Prostate gland (tissue), 2 donors: ENCODE measurements at regions of chr3 and their contacts with region 1.

Region 1: DNA sequence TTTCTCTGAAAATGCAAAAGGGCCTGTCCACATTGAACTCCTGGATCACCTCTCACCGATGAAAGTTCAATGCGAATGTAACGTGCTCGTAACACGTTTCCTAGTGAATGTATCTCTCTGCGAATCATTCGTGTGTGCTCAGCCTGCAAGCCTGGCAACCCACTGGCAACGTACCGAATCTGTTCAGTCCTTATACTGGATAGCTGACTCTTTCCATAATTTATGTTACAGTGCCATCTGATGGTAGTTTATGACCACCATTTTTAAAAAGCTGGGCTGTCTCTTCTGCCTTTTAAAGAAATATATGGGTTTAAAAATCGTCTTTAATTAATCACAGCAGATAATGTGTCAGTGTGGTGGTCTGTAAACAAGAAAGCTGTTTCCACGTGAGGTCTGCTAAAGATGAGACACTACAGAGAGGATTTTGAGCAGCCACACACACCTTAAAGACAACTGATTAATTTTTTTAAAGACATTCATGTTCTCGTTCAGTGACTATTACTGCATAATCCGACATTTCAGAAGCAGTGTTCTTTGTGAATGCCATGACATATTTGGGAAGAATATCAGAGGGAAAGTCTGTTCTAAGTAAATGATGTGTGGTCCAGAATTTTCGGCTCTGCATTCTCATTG is 69.4 kb upstream of the FOXP1 start:
- DNase-seq: peak; percentile 71
- H3K4me3 ChIP-seq: no peak overlapping the region
- H3K27ac ChIP-seq: peak overlapping the region in 1 of 2 donors; percentile 9
- H3K4me1 ChIP-seq: no peaks in the 10 kb centered on the region
- H3K27me3 ChIP-seq: no peaks in the 10 kb centered on the region
- CTCF ChIP-seq: peak in 3 of 4 experiments; percentile 62 to 73 (median 67)
- POLR2A ChIP-seq: no peak

Region 2: GRCh38 chr3:70064194-70064779 is 1588.6 kb before region 1 on chr3:
- intact Hi-C with region 1: loop called (anchors 5 kb)
- DNase-seq: peak; percentile 12
- H3K4me3 ChIP-seq: no peak overlapping the region
- H3K27ac ChIP-seq: no peak overlapping the region
- H3K4me1 ChIP-seq: no peaks in the 10 kb centered on the region
- H3K27me3 ChIP-seq: no peaks in the 10 kb centered on the region
- CTCF ChIP-seq: peak in 3 of 4 experiments; percentile 60 to 74 (median 72)
- POLR2A ChIP-seq: no peak

Region 3: GRCh38 chr3:70519913-70520659 is 1132.8 kb before region 1 on chr3:
- intact Hi-C with region 1: loop called (anchors 10 kb)
- DNase-seq: no peak
- H3K4me3 ChIP-seq: no peak overlapping the region
- H3K27ac ChIP-seq: no peak overlapping the region
- H3K4me1 ChIP-seq: no peaks in the 10 kb centered on the region
- H3K27me3 ChIP-seq: no peaks in the 10 kb centered on the region
- CTCF ChIP-seq: no peak
- POLR2A ChIP-seq: no peak

Region 4: DNA sequence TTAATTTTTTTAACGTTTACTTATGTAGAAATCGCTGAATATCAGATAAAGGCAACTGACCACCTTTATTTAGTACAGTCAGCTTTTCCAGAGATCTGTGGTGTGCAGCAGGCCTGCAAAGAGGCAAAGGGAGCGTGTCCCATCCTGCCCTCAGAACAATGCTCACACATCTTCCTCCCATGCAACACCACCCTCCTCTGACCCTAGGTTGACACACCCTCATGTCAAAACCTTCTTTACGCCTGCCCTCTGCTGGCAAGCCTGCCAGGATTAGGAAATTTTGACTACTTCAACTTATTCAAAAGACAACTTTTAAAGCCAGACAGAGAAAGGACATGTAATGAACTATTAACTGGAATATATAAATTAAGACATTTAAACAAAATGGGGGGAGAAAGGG is 583.1 kb before region 1 on chr3:
- intact Hi-C with region 1: loop called (anchors 5 kb)
- DNase-seq: peak; percentile 86
- H3K4me3 ChIP-seq: no peak overlapping the region
- H3K27ac ChIP-seq: peak overlapping the region; percentile 59 to 96
- H3K4me1 ChIP-seq: peaks cover 9% of the 10 kb centered on the region
- H3K27me3 ChIP-seq: no peaks in the 10 kb centered on the region
- CTCF ChIP-seq: peak; percentile 18 to 69 (median 58)
- POLR2A ChIP-seq: no peak

Region 5: GRCh38 chr3:71846185-71846584 is 193.3 kb after region 1 on chr3:
- intact Hi-C with region 1: no loop called
- DNase-seq: no peak
- H3K4me3 ChIP-seq: no peak overlapping the region
- H3K27ac ChIP-seq: no peak overlapping the region
- H3K4me1 ChIP-seq: no peaks in the 10 kb centered on the region
- H3K27me3 ChIP-seq: no peaks in the 10 kb centered on the region
- CTCF ChIP-seq: no peak
- POLR2A ChIP-seq: no peak